ENCODE measurements at regions of chr2 and their contacts with region 1.

Region 1: DNA sequence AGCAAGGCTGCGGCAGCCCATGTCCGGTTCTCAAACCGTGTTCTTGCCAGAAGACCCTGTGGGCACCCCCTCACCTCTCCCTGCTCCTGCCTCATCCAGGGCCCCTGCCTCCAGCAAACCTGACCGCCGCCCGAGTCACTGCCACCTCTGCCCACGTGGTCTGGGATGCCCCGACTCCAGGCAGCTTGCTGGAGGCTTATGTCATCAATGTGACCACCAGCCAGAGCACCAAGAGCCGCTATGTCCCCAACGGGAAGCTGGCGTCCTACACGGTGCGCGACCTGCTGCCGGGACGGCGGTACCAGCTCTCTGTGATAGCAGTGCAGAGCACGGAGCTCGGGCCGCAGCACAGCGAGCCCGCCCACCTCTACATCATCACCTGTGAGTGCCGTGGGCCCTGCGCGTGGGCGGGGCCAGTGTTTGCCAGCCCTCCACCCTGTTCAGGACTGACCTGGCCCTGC is 32.2 kb downstream of the MTERF4 start:
- DNase-seq: no peak
- H3K4me3 ChIP-seq: no peak overlapping the region
- H3K27ac ChIP-seq: no peak overlapping the region
- H3K4me1 ChIP-seq: no peaks in the 10 kb centered on the region; a peak in 1 of 7 replicates
- H3K27me3 ChIP-seq: no peaks in the 10 kb centered on the region
- CTCF ChIP-seq: no peak
- EP300 ChIP-seq: no peak
- POLR2A ChIP-seq: no peak
- RAD21 ChIP-seq: no peak

Region 2: DNA sequence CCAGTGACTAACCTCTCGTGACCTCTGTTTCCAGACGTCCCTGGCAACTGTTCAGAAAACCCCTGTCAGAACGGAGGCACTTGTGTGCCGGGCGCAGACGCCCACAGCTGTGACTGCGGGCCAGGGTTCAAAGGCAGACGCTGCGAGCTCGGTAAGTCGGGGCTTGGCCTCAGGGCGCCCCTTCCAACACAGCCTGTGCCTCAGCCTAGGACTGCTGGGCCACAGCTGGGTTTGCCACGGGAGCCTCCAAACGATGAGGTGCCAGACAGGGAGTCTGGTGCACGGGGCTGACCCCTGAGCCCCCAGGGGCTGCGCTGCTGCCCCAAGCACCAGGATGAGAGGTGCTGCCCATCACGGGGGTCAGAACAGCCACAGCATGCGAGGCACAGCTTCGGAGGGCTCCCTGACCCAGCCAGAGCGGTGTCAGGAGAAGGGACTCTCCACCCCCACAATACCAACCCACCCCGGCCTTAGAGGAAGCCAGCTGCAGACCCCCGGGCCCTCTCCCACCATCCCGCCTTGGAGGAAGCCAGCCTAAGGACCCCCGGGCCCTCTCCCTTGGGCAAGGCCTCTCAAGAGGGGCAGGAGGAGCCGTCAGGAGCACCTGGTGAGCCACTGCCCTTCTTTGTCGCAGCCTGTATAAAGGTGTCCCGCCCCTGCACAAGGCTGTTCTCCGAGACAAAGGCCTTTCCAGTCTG is 11.9 kb after region 1 on chr2:
- CTCF ChIA-PET with region 1: interaction called, 12 read pairs
- POLR2A ChIA-PET with region 1: no interaction called
- DNase-seq: no peak
- H3K4me3 ChIP-seq: no peak overlapping the region
- H3K27ac ChIP-seq: no peak overlapping the region
- H3K4me1 ChIP-seq: no peaks in the 10 kb centered on the region
- H3K27me3 ChIP-seq: no peaks in the 10 kb centered on the region
- CTCF ChIP-seq: no peak
- EP300 ChIP-seq: no peak
- POLR2A ChIP-seq: no peak
- RAD21 ChIP-seq: no peak

Measured in H1 (cell line).